Dendritic cell treated with granulocyte-macrophage colony-stimulating factor and Interleukin-4, amounts not matched to agents 40 ng/mL and 50 ng/mL, for 4 days (primary cell): ENCODE measurements at regions of chr3 and their contacts with region 1.

Region 1: GRCh38 chr3:69691860-69692259 is 47.4 kb upstream of the MITF start:
- H3K4me3 Mint-ChIP-seq: no peak overlapping the region
- H3K27ac Mint-ChIP-seq: no peak overlapping the region
- H3K4me1 Mint-ChIP-seq: peaks cover 25% of the 10 kb centered on the region
- H3K27me3 Mint-ChIP-seq: peaks cover 2% of the 10 kb centered on the region

Region 2: DNA sequence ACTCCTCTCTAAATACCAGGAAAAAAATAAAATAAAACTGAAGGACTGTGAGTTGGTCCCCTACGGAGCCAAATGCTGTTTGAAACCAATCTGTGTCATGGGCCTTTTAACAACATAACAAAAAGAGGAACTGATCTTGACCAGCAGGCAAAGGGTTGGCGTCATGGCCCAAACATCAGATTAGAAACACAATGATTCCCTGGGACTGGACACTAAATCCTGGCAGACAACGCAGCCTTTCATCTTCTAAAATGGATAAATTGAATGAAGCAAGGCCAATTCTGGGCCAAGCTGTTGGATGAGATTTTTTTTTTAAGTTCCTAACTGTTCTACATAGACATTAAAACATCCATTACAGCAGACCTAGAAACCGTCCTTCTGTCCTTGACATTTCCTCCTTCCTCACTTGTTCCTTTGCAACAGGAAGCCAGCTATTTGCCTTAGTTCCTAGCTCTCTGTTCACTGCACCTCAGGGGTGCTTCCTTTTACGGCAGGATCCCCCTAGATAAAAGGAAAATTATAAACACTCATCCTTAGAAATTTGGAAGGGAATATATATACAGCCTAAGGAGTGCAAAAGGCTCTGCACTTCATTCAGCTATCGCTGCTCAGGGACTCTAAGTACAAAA is 737.9 kb before region 1 on chr3:
- intact Hi-C with region 1: no loop called
- H3K4me3 Mint-ChIP-seq: no peak overlapping the region
- H3K27ac Mint-ChIP-seq: no peak overlapping the region
- H3K4me1 Mint-ChIP-seq: peaks cover 2% of the 10 kb centered on the region
- H3K27me3 Mint-ChIP-seq: peaks cover 13% of the 10 kb centered on the region

Region 3: DNA sequence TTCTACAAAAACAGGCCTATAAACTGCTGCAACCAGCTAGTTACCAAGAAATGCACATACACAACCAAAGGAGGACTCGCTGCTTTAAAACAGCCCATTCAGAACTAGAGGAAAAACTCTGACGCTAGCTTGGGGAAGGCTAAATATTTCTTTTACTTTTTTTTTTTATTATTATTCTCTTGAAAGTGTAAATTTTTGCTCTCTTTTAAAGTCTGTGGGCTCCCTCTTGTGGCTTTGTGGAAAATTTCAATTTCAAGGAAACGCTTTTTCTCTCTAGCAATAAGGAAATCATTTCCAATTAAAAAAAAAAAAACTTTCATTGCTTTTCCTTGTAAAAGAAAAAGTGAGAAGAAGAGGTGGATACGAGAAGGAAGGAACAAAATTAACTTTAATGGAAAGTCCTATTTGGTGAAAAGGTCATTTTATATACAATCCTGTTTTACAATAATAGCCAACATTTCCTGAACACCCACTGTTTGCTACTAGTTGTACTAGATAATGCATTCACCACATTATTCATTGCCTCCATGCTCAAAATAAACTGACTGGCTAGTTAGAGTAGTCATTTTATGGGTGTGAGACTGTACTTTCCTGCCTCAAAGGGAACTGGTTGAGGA is 256.5 kb after region 1 on chr3:
- intact Hi-C with region 1: loop called (anchors 2 kb)
- H3K4me3 Mint-ChIP-seq: no peak overlapping the region
- H3K27ac Mint-ChIP-seq: no peak overlapping the region
- H3K4me1 Mint-ChIP-seq: no peaks in the 10 kb centered on the region
- H3K27me3 Mint-ChIP-seq: no peaks in the 10 kb centered on the region